Activated CD4-positive, alpha-beta T cell treated with anti-CD3 and anti-CD28 coated beads for 36 hours (primary cell): ENCODE measurements at regions of chr22 and their contacts with region 1.

Region 1: GRCh38 chr22:46250035-46250782 is at the start of gene CDPF1:
- DNase-seq: peak; percentile 96
- ATAC-seq: peak; percentile 92
- H3K4me3 Mint-ChIP-seq: peak within 1 kb of the TSS; percentile 79
- H3K27ac Mint-ChIP-seq: peak within 1 kb of the TSS; percentile 80
- H3K4me1 Mint-ChIP-seq: peaks cover 25% of the 10 kb centered on the region
- H3K27me3 Mint-ChIP-seq: no peaks in the 10 kb centered on the region
- total RNA-seq, gene CDPF1: 8.1 to 8.8 TPM

Region 2: GRCh38 chr22:45671768-45672563 is 578.2 kb before region 1 on chr22 and contains the start of gene ATXN10:
- CTCF ChIA-PET with region 1: no interaction called
- POLR2A ChIA-PET with region 1: no interaction called
- intact Hi-C with region 1: loop called in 1 of 2 experiments (anchors 5 kb)
- DNase-seq: peak; percentile 83
- ATAC-seq: peak; percentile 78
- H3K4me3 Mint-ChIP-seq: peak within 1 kb of the TSS; percentile 89
- H3K27ac Mint-ChIP-seq: peak within 1 kb of the TSS; percentile 87
- H3K4me1 Mint-ChIP-seq: peaks cover 33% of the 10 kb centered on the region
- H3K27me3 Mint-ChIP-seq: peaks cover 3% of the 10 kb centered on the region
- total RNA-seq, gene ATXN10: 87.1 to 101 TPM

Region 3: GRCh38 chr22:46057762-46058420 is 192.3 kb before region 1 on chr22:
- CTCF ChIA-PET with region 1: no interaction called
- POLR2A ChIA-PET with region 1: no interaction called
- intact Hi-C with region 1: loop called in 1 of 2 experiments (anchors 5 kb)
- DNase-seq: peak; percentile 66
- ATAC-seq: peak; percentile 82
- H3K4me3 Mint-ChIP-seq: peak overlapping the region; percentile 28
- H3K27ac Mint-ChIP-seq: peak overlapping the region; percentile 79
- H3K4me1 Mint-ChIP-seq: peaks cover 48% of the 10 kb centered on the region
- H3K27me3 Mint-ChIP-seq: no peaks in the 10 kb centered on the region

Region 4: GRCh38 chr22:46267431-46268279 is 17.4 kb after region 1 on chr22 and contains the start of gene TTC38:
- CTCF ChIA-PET with region 1: interaction called, 3 read pairs
- POLR2A ChIA-PET with region 1: interaction called, 3 read pairs
- intact Hi-C with region 1: loop called in 1 of 2 experiments (anchors 1 kb)
- DNase-seq: peak; percentile 61
- ATAC-seq: peak; percentile 85
- H3K4me3 Mint-ChIP-seq: peak within 1 kb of the TSS; percentile 80
- H3K27ac Mint-ChIP-seq: no peak within 1 kb of the TSS
- H3K4me1 Mint-ChIP-seq: peaks cover 11% of the 10 kb centered on the region
- H3K27me3 Mint-ChIP-seq: peaks cover 33% of the 10 kb centered on the region
- total RNA-seq, gene TTC38: 5.2 to 5.8 TPM

Region 5: GRCh38 chr22:46335201-46336118 is 85.3 kb after region 1 on chr22 and contains the start of gene TRMU:
- CTCF ChIA-PET with region 1: no interaction called
- POLR2A ChIA-PET with region 1: no interaction called
- intact Hi-C with region 1: loop called in 1 of 2 experiments (anchors 1 kb)
- DNase-seq: peak; percentile 86
- ATAC-seq: peak; percentile 89
- H3K4me3 Mint-ChIP-seq: peak within 1 kb of the TSS; percentile 99
- H3K27ac Mint-ChIP-seq: peak within 1 kb of the TSS; percentile 94
- H3K4me1 Mint-ChIP-seq: peaks cover 35% of the 10 kb centered on the region
- H3K27me3 Mint-ChIP-seq: no peaks in the 10 kb centered on the region
- total RNA-seq, gene TRMU: 61.4 to 75.3 TPM

Region 6: DNA sequence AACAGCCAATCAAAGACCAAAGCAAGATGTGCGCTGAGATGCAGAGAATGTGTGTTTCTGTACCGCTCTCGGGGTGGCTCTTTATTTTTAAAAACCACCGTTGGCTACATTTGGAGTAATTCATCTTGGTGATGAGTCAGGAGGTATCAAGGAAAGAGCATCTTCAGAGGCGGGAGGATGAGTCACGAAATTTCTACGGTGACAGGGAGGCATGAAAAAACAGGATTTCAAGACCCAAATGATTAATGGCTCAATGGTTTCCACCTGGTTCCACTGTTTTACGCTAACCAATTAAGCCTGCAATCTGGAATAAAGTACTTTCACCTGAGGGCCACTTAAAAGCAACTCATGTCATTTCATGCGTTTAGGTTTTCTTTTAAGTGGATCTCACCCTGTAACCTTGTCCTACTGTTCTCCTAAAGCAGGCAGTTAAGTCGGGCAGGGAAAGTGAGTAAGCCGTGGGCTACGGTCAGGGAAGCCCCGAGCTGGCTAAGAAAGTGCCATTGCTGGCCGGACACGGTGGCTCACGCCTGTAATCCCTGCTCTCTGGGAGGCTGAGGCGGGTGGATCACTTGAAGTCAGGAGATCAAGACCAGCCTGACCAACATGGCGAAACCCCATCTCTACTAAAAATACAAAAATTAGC is 212.6 kb after region 1 on chr22:
- CTCF ChIA-PET with region 1: no interaction called
- POLR2A ChIA-PET with region 1: no interaction called
- intact Hi-C with region 1: no loop called
- DNase-seq: peak; percentile 25
- ATAC-seq: peak; percentile 76
- H3K4me3 Mint-ChIP-seq: no peak overlapping the region
- H3K27ac Mint-ChIP-seq: no peak overlapping the region
- H3K4me1 Mint-ChIP-seq: peaks cover 7% of the 10 kb centered on the region
- H3K27me3 Mint-ChIP-seq: peaks cover 5% of the 10 kb centered on the region

Region 7: GRCh38 chr22:46731246-46732040 is 481.2 kb after region 1 on chr22:
- CTCF ChIA-PET with region 1: no interaction called
- POLR2A ChIA-PET with region 1: no interaction called
- intact Hi-C with region 1: no loop called
- DNase-seq: peak; percentile 22
- ATAC-seq: peak; percentile 24
- H3K4me3 Mint-ChIP-seq: peak overlapping the region; percentile 5
- H3K27ac Mint-ChIP-seq: peak overlapping the region; percentile 64
- H3K4me1 Mint-ChIP-seq: peaks cover 60% of the 10 kb centered on the region
- H3K27me3 Mint-ChIP-seq: no peaks in the 10 kb centered on the region

Region 8: GRCh38 chr22:47259990-47260389 is 1009.8 kb after region 1 on chr22:
- CTCF ChIA-PET with region 1: no interaction called
- POLR2A ChIA-PET with region 1: no interaction called
- intact Hi-C with region 1: no loop called
- DNase-seq: no peak
- ATAC-seq: no peak
- H3K4me3 Mint-ChIP-seq: no peak overlapping the region
- H3K27ac Mint-ChIP-seq: no peak overlapping the region
- H3K4me1 Mint-ChIP-seq: no peaks in the 10 kb centered on the region
- H3K27me3 Mint-ChIP-seq: peaks cover 9% of the 10 kb centered on the region